ENCODE measurements at regions of chr20 and their contacts with region 1.

Region 1: DNA sequence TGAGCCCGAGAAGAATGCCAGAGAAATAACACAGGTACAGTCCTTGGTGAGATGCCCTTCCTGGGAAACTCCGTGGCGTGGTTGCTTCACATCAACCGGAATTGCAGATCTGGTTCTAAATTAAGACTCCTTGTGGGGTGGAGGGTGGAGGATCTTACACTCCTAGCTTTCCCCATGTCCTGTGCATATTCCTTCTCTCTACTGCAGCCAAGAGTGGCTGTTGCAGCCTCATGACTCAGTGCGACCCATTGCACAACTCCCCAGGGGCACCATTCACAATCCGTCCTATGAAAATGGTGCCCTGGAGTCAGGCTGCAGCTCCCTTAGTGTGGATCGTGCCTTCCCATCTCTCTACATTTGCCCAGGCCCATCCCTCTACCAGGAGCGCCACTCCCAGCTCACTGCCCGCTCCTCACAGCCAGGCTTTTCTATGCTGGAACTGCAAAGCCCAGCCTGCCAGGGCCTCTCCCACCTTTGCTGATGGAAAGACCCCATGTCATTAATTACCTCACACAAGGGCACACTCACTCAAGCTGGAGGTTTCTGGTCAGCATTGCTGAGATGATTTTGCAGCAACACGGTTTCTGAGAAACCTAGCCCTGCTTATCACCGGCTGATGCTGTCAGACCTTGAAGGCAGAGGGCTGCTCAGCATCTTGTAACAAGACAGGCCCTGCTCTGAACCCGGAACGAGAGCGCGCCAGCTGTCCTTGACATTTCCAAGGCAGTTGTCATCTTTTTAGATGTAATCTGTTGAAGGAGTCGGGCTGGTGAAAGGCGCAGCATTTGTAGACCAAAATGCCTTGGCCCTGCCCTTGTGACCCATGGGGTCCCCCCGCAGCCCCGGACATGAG is 39.7 kb downstream of the SIRPA start:
- DNase-seq: peak in 4 of 5 donors; percentile 60 to 89 (median 62)
- H3K4me3 ChIP-seq: no peak overlapping the region
- H3K27ac ChIP-seq: peak overlapping the region in 1 of 2 donors; percentile 14
- H3K4me1 ChIP-seq: peaks cover 4% of the 10 kb centered on the region
- H3K27me3 ChIP-seq: no peaks in the 10 kb centered on the region
- CTCF ChIP-seq: no peak
- EP300 ChIP-seq: no peak
- POLR2A ChIP-seq: no peak

Region 2: DNA sequence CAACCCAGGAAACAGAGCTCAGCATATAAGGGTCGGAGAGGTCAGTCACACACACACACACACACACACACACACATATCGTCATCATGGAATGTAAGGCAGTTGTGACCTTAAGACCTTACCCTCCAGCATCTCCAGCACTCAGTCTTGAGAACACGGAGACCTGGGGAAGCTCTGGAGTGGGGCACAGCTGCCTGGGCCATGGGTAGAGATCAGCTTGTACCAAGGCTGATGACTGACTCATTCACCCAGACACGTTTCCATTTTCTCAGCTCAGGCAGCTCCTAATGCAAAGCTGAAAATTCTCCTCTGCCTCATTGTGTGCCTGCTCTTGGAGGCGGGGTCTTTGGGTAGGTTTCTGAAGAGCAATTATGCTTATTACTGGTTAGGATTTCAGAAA is 97.2 kb after region 1 on chr20:
- intact Hi-C with region 1: no loop called
- DNase-seq: no peak
- H3K4me3 ChIP-seq: no peak overlapping the region
- H3K27ac ChIP-seq: no peak overlapping the region
- H3K4me1 ChIP-seq: no peaks in the 10 kb centered on the region
- H3K27me3 ChIP-seq: no peaks in the 10 kb centered on the region
- CTCF ChIP-seq: no peak
- EP300 ChIP-seq: no peak
- POLR2A ChIP-seq: no peak

Region 3: DNA sequence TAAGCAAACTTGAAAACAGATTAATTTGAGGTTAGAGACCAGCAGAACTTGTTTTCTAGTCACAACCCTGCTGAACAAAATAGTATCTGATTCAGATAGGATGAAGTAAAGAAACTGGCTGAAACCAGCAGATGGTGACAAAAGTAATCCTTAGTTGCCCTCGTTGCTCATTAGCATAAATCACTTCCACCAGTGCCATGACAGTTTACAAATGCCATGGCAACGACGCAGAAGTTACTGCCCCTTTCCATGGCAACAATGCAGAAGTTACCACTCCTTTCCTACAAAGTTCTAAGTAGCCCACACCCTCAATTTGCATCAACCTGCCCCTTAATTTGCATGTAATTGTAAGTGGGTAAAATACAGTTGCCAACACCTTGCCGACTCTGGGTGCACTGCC is 511.9 kb after region 1 on chr20:
- intact Hi-C with region 1: loop called in 1 of 4 experiments (anchors 5 kb)
- DNase-seq: no peak
- H3K4me3 ChIP-seq: no peak overlapping the region
- H3K27ac ChIP-seq: no peak overlapping the region
- H3K4me1 ChIP-seq: no peaks in the 10 kb centered on the region
- H3K27me3 ChIP-seq: no peaks in the 10 kb centered on the region
- CTCF ChIP-seq: no peak
- EP300 ChIP-seq: no peak
- POLR2A ChIP-seq: no peak

Measured in ovary (tissue), 10 donors.